Calu3 (cell line): ENCODE measurements at regions of chr11 and their contacts with region 1.

Region 1: GRCh38 chr11:66835768-66836405 is 7.4 kb upstream of the RCE1 start:
- DNase-seq: no peak
- H3K4me3 Mint-ChIP-seq: no peak overlapping the region
- H3K27ac Mint-ChIP-seq: no peak overlapping the region
- H3K4me1 Mint-ChIP-seq: peaks cover 17% of the 10 kb centered on the region
- H3K27me3 Mint-ChIP-seq: no peaks in the 10 kb centered on the region
- CTCF ChIP-seq: no peak

Region 2: DNA sequence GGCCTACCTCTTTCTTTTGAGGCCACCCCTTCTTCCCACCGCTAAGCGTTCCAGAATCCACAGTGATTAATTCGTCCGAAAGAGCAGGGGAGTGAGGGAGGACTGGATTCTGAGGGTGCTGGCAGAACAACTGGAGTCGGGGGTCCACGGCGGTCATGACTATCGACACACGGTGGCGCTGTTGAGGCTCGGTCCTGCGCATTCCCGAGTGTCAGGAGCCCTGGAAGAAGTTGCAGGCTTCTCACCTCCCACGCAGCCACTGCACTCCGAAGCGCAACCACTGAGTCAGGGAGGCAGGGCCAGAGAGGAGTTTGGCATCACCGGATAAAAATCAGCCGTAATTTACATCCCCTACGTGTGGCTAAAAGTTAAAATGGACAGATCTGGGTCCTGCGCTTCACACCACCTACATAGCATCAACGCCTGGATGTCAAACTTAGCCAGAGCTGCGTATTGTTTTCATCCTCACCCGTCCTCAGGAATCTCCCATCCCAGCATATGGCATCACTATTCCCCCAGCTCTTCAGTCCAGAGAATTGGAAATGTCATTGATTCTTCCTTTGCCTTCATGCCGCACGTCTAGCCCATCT is 256.8 kb before region 1 on chr11:
- CTCF ChIA-PET with region 1: no interaction called
- intact Hi-C with region 1: loop called (anchors 10 kb)
- DNase-seq: peak; percentile 75
- H3K4me3 Mint-ChIP-seq: no peak overlapping the region
- H3K27ac Mint-ChIP-seq: no peak overlapping the region
- H3K4me1 Mint-ChIP-seq: no peaks in the 10 kb centered on the region
- H3K27me3 Mint-ChIP-seq: peaks cover 54% of the 10 kb centered on the region
- CTCF ChIP-seq: peak; percentile 81

Region 3: DNA sequence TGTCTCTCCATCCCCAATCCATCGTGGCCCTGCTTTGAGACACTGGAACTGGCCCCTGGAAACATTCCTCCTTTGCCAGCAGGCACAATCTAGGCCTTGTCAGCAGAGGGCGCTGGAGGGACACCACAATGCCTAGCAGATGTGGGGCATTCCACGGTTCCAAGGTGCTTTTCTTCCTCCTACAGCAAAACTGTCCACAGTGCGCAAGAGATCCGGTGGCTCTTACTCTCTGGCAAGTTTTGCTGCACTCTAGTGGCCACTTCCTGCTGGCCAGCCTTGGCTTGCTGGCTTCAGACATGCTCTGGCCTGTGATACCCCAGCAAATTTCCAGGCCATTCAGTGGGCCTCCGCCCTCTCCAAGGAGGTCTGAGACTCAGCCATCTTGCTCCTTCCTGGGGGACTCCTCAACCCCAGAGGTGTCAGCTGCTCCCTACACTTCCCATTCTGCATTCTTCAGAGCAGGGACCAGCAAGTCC is 141.1 kb before region 1 on chr11:
- CTCF ChIA-PET with region 1: interaction called, 3 read pairs
- intact Hi-C with region 1: loop called (anchors 1 kb)
- DNase-seq: peak; percentile 93
- H3K4me3 Mint-ChIP-seq: no peak overlapping the region
- H3K27ac Mint-ChIP-seq: no peak overlapping the region
- H3K4me1 Mint-ChIP-seq: no peaks in the 10 kb centered on the region
- H3K27me3 Mint-ChIP-seq: no peaks in the 10 kb centered on the region
- CTCF ChIP-seq: peak; percentile 92